MCF 10A (cell line): ENCODE measurements at regions of chr9 and their contacts with region 1.

Region 1: DNA sequence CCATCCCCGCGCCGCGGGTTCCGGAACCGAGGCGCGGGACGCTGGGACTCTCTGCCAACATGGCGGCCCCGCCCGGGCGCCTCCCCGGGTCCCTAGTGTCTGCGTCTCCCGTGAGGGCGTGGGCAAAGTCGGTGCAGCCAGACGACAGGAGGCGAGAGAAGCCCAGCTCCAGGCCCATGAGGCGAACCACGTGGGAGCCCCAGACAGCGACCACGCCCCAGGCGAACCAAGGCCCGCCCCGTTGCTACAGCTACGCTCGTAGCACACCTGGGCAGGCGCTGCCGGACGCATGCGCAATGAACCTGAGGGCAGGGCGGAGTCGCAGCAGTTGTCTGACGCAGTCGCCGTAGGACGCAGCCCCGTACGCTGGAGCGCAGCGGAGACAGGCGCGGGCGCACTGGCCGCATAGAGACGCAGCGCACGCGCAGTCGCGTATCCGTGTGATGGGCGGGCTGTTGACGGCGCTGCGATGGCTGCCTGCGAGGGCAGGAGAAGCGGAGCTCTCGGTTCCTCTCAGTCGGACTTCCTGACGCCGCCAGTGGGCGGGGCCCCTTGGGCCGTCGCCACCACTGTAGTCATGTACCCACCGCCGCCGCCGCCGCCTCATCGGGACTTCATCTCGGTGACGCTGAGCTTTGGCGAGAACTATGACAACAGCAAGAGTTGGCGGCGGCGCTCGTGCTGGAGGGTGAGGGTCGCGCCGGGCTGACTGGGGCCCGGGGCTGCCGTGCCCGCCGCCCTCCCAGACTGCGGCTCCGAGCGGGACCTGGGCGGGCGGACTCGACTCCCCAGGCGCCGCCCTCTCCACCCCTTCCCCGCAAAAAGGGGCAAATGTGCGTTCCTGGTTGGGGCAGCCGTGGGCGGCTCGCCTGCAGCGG is at the start of gene MAN1B1:
- DNase-seq: peak; percentile 99
- H3K4me3 Mint-ChIP-seq: peak within 1 kb of the TSS; percentile 90
- H3K27ac Mint-ChIP-seq: peak within 1 kb of the TSS; percentile 89
- H3K4me1 Mint-ChIP-seq: peaks cover 40% of the 10 kb centered on the region
- H3K27me3 Mint-ChIP-seq: no peaks in the 10 kb centered on the region
- CTCF ChIP-seq: no peak
- total RNA-seq, gene MAN1B1: 46.5 and 49.1 TPM in 2 replicates

Region 2: DNA sequence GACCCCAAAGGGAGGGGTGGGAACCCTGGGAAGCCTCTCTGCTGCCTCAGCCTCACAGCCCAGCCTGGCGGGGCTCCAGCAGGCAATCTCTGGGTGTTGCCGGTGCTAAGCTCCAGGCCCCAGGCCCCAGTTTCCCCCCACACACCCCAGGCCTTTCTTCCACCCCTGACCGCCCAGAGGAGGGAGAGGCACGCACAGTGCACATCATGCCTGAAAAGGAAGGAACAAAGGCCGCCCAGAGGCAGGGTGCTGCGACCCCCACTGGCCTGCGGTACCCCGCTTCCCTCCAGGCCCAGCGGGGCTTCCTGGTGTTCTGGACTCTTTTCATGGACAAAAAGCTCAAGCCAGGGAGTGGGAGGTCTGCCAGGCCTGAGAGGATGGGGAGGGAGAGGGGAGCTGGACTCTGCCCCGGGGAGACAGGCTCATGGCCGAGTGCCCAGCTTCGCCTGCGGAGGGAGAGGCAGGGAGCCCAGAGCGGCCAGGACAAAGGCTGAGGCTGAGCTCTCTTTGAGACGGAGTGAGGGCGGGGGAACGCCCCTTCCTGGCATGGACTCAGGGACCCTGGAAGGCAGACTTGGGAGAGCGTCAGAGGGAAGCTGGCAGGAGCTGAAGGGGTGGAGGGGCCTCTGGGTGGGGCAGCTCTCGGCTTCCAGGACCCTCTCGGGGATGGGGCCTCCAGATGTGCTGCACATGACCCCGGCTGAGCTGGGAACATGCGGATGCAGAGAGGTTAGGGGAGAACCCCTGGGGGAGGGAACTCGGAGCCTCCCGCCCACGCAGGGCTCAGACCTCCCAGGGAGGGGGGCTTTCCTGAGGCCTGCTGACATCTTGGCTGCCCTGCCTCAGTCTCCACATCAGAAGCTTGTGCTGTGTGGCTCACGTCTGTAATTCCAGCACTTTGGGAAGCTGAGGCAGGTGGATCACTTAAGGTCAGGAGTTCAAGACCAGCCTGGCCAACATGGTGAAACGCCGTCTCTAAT is 31.1 kb before region 1 on chr9:
- CTCF ChIA-PET with region 1: interaction called, 5 read pairs
- POLR2A ChIA-PET with region 1: interaction called, 14 read pairs
- intact Hi-C with region 1: no loop called
- DNase-seq: peak; percentile 94
- H3K4me3 Mint-ChIP-seq: peak overlapping the region; percentile 49
- H3K27ac Mint-ChIP-seq: no peak overlapping the region
- H3K4me1 Mint-ChIP-seq: peaks cover 7% of the 10 kb centered on the region
- H3K27me3 Mint-ChIP-seq: no peaks in the 10 kb centered on the region
- CTCF ChIP-seq: no peak

Region 3: GRCh38 chr9:137070201-137070905 is 16.4 kb before region 1 on chr9 and contains the start of gene SAPCD2:
- CTCF ChIA-PET with region 1: interaction called, 23 read pairs
- POLR2A ChIA-PET with region 1: interaction called, 22 read pairs
- intact Hi-C with region 1: no loop called
- DNase-seq: peak; percentile 90
- H3K4me3 Mint-ChIP-seq: peak within 1 kb of the TSS; percentile 72
- H3K27ac Mint-ChIP-seq: no peak within 1 kb of the TSS
- H3K4me1 Mint-ChIP-seq: peaks cover 11% of the 10 kb centered on the region
- H3K27me3 Mint-ChIP-seq: no peaks in the 10 kb centered on the region
- CTCF ChIP-seq: no peak
- total RNA-seq, gene SAPCD2: 5.7 and 15.7 TPM in 2 replicates

Region 4: DNA sequence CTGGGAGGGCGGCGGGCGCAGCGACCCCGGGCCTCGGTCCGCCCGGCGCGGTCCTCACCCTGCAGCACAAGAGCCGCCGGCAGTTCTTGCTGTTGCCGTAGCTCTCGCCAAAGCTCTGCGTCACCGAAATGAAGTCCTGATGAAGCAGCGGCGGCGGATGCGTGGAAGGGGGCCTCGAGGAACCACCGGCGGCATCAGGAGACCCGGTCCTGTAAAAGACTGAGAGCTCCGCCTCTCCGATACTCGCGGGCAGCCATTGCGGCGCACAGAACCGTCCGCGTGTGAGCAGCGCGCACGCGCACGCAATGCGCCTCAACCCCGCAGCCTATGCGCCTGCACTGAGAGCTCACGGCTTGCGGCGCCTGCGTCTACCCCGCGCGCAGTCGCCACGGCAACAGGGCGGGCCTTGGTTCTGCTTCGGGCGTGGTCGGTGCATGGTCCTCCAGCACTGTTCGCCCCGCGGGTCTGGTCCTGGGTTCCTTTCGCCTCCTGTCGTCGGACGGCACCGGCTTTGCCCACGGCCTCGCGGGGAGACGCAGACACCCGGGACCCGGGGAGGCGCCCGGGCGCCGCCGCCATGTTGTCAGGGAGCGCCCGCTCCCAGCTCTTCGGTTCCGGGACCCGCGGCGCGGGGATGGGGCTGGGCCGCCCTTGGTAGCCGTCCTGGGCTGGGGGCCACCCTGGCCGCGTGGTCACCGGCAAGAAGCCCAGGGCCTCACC is 42.8 kb after region 1 on chr9:
- CTCF ChIA-PET with region 1: no interaction called
- POLR2A ChIA-PET with region 1: interaction called, 18 read pairs
- intact Hi-C with region 1: no loop called
- DNase-seq: peak; percentile 91
- H3K4me3 Mint-ChIP-seq: peak overlapping the region; percentile 77
- H3K27ac Mint-ChIP-seq: no peak overlapping the region
- H3K4me1 Mint-ChIP-seq: peaks cover 18% of the 10 kb centered on the region
- H3K27me3 Mint-ChIP-seq: no peaks in the 10 kb centered on the region
- CTCF ChIP-seq: no peak

Region 5: GRCh38 chr9:137223078-137223970 is 136.6 kb after region 1 on chr9:
- CTCF ChIA-PET with region 1: no interaction called
- POLR2A ChIA-PET with region 1: interaction called, 14 read pairs
- intact Hi-C with region 1: no loop called
- DNase-seq: peak; percentile 98
- H3K4me3 Mint-ChIP-seq: peak overlapping the region; percentile 83
- H3K27ac Mint-ChIP-seq: peak overlapping the region; percentile 61
- H3K4me1 Mint-ChIP-seq: peaks cover 15% of the 10 kb centered on the region
- H3K27me3 Mint-ChIP-seq: no peaks in the 10 kb centered on the region
- CTCF ChIP-seq: no peak